CD4-positive, alpha-beta T cell (primary cell): ENCODE measurements at regions of chr20 and their contacts with region 1.

Region 1: DNA sequence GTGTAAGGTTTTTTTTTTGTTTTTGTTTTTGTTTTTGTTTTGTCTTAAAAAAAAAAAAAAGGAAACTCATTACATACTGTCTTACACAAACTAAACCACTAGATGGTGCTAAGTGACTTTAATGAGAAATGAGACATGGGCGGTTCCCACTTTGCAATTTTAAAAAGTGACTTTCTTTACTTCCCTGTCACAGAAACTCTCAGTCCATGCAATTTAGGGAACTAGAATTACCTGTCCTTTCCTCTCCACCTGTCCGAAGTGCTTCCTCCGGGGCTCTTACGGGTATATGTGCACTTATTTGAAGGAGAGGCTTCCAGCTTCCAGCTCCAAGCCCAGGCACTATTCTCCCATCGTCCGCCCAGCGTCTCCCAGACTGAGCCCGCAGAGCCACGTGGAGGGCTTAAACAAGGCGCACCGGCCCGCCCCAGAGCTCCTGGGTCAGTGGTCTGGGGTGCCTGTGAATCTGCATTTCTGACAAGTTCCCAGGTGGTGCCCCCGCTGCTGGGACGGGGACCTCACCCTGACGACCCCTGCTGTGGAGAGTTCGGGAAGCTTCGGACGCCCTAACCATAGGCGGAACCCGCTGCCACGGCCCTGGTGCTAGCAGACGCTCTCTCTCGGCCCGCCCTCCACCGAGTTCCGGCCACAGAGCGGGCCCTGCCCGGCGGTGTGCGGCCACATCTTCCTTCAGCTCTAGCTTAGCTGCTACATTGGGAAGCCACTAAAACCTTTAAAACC is 26.1 kb downstream of the BFSP1 start:
- DNase-seq: peak in 13 of 14 experiments; percentile 8 to 80 (median 25)
- ATAC-seq: peak; percentile 80
- H3K4me3 ChIP-seq: peak overlapping the region; percentile 69
- H3K4me3 Mint-ChIP-seq: peak overlapping the region; percentile 93
- H3K27ac ChIP-seq: peak overlapping the region; percentile 4 to 48
- H3K27ac Mint-ChIP-seq: peak overlapping the region; percentile 83
- H3K4me1 ChIP-seq: peaks cover 41% of the 10 kb centered on the region
- H3K4me1 Mint-ChIP-seq: peaks cover 32% of the 10 kb centered on the region
- H3K27me3 ChIP-seq: no peaks in the 10 kb centered on the region
- H3K27me3 Mint-ChIP-seq: no peaks in the 10 kb centered on the region
- CTCF ChIP-seq: peak; percentile 69

Region 2: GRCh38 chr20:17617551-17618223 is 112.6 kb after region 1 on chr20:
- CTCF ChIA-PET with region 1: interaction called, 6 read pairs
- POLR2A ChIA-PET with region 1: interaction called, 3 read pairs
- intact Hi-C with region 1: loop called (anchors 1 to 2 kb)
- DNase-seq: peak in 11 of 14 experiments; percentile 27 to 66 (median 45)
- ATAC-seq: peak; percentile 55
- H3K4me3 ChIP-seq: no peak overlapping the region
- H3K4me3 Mint-ChIP-seq: no peak overlapping the region
- H3K27ac ChIP-seq: no peak overlapping the region
- H3K27ac Mint-ChIP-seq: no peak overlapping the region
- H3K4me1 ChIP-seq: peaks cover 11% of the 10 kb centered on the region
- H3K4me1 Mint-ChIP-seq: peaks cover 7% of the 10 kb centered on the region
- H3K27me3 ChIP-seq: no peaks in the 10 kb centered on the region
- H3K27me3 Mint-ChIP-seq: no peaks in the 10 kb centered on the region
- CTCF ChIP-seq: peak; percentile 70

Region 3: GRCh38 chr20:17898548-17898994 is 393.5 kb after region 1 on chr20:
- CTCF ChIA-PET with region 1: interaction called, 5 read pairs
- POLR2A ChIA-PET with region 1: no interaction called
- intact Hi-C with region 1: loop called (anchors 1 kb)
- DNase-seq: peak; percentile 39 to 80 (median 54)
- ATAC-seq: peak; percentile 89
- H3K4me3 ChIP-seq: no peak overlapping the region
- H3K4me3 Mint-ChIP-seq: no peak overlapping the region
- H3K27ac ChIP-seq: no peak overlapping the region
- H3K27ac Mint-ChIP-seq: no peak overlapping the region
- H3K4me1 ChIP-seq: peaks cover 10% of the 10 kb centered on the region
- H3K4me1 Mint-ChIP-seq: peaks cover 11% of the 10 kb centered on the region
- H3K27me3 ChIP-seq: peaks cover 0 to 10% of the 10 kb centered on the region in 2 experiments
- H3K27me3 Mint-ChIP-seq: peaks cover 27% of the 10 kb centered on the region
- CTCF ChIP-seq: peak; percentile 95

Region 4: DNA sequence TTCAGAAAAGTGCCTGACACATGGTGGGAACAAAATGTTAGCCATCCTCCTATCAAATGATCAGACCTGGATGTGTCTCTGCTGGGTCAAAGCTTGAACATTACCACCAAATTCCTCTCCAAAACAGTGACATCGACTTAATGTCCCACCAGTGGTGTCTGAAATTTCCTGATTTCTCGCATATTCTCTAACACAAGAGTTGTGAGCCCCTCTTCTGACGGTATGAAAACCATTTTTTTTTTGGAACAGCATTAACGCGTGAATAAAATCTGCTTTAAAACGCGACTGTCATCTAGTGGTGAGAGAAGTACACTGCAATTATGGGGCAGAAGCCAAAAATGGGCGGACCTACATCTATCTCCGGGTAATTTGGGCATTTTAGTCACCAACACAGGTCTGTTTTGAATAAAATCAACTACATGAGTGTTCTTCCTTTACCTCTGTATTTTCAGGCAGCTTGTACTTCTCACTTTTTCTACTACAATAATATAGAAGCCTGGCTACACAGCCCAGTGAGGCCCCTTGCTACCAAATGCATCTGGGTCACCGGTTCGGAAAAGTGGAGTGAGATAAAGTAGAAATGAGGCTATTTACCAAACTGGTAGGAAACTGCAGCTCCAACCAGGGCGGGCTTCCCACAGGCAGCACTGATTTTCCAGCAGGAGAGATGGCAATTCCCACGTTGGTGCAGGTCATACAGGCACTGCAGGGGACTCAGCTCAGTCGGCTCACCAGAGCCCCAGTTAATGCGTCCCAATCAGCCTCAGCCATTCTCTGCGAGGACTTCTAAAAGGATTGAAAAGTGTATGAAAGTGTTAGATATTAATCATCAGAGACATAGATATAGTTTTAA is 491.1 kb after region 1 on chr20:
- CTCF ChIA-PET with region 1: interaction called, 5 read pairs
- POLR2A ChIA-PET with region 1: no interaction called
- intact Hi-C with region 1: loop called (anchors 1 to 2 kb)
- DNase-seq: peak in 11 of 14 experiments; percentile 8 to 80 (median 22)
- ATAC-seq: peak; percentile 97
- H3K4me3 ChIP-seq: no peak overlapping the region
- H3K4me3 Mint-ChIP-seq: no peak overlapping the region
- H3K27ac ChIP-seq: no peak overlapping the region
- H3K27ac Mint-ChIP-seq: no peak overlapping the region
- H3K4me1 ChIP-seq: peaks cover 7% of the 10 kb centered on the region
- H3K4me1 Mint-ChIP-seq: peaks cover 22% of the 10 kb centered on the region
- H3K27me3 ChIP-seq: peaks cover 0 to 2% of the 10 kb centered on the region in 2 experiments
- H3K27me3 Mint-ChIP-seq: no peaks in the 10 kb centered on the region
- CTCF ChIP-seq: peak; percentile 88

Region 5: GRCh38 chr20:18137412-18138265 is 632.6 kb after region 1 on chr20 and contains the starts of genes KAT14 and PET117:
- CTCF ChIA-PET with region 1: no interaction called
- POLR2A ChIA-PET with region 1: no interaction called
- intact Hi-C with region 1: loop called in 1 of 2 experiments (anchors 10 kb)
- DNase-seq: peak; percentile 83 to 96 (median 91)
- ATAC-seq: peak; percentile 92
- H3K4me3 ChIP-seq: peak within 1 kb of the TSS; percentile 81
- H3K4me3 Mint-ChIP-seq: peak within 1 kb of the TSS; percentile 96
- H3K27ac ChIP-seq: peak within 1 kb of the TSS; percentile 72 to 75
- H3K27ac Mint-ChIP-seq: peak within 1 kb of the TSS; percentile 95
- H3K4me1 ChIP-seq: peaks cover 32% of the 10 kb centered on the region
- H3K4me1 Mint-ChIP-seq: peaks cover 32% of the 10 kb centered on the region
- H3K27me3 ChIP-seq: no peaks in the 10 kb centered on the region
- H3K27me3 Mint-ChIP-seq: no peaks in the 10 kb centered on the region
- CTCF ChIP-seq: no peak
- total RNA-seq, gene KAT14: 8.5 to 9.4 TPM
- total RNA-seq, gene PET117: 13.6 to 14.6 TPM

Region 6: GRCh38 chr20:18276821-18277220 is 771.8 kb after region 1 on chr20:
- CTCF ChIA-PET with region 1: no interaction called
- POLR2A ChIA-PET with region 1: no interaction called
- intact Hi-C with region 1: loop called (anchors 5 to 10 kb)
- DNase-seq: peak; percentile 7 to 72 (median 29)
- ATAC-seq: peak; percentile 73
- H3K4me3 ChIP-seq: no peak overlapping the region
- H3K4me3 Mint-ChIP-seq: no peak overlapping the region
- H3K27ac ChIP-seq: no peak overlapping the region
- H3K27ac Mint-ChIP-seq: no peak overlapping the region
- H3K4me1 ChIP-seq: peaks cover 5% of the 10 kb centered on the region
- H3K4me1 Mint-ChIP-seq: no peaks in the 10 kb centered on the region
- H3K27me3 ChIP-seq: peaks cover 9 to 24% of the 10 kb centered on the region in 2 experiments
- H3K27me3 Mint-ChIP-seq: peaks cover 73% of the 10 kb centered on the region
- CTCF ChIP-seq: peak; percentile 74